ENCODE measurements at regions of chr4 and their contacts with region 1.

Region 1: DNA sequence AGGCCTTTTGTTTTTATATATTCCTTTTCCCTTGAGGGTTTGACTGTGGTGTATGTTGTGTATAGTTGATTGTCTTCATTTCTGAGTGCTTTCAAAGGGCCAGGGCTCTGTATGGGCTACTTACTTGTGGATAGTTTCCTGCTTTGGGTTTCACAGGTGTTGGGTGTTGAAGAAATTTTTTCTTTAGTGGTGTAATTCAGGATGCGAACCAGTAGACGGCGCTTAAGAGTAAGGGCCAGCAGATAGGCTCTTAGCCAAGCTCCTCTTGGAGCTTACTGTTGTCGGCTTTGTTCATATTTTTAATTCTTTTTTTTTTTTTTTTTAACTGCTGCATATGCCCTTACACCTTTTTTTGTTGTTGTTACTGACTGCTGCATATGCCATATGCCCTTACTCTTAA is 276.3 kb upstream of the GALNT7 start:
- DNase-seq: peak; percentile 52
- ATAC-seq: no peak
- H3K4me3 ChIP-seq: no peak overlapping the region
- H3K27ac ChIP-seq: no peak overlapping the region
- H3K4me1 ChIP-seq: no peaks in the 10 kb centered on the region
- H3K27me3 ChIP-seq: no peaks in the 10 kb centered on the region
- CTCF ChIP-seq: peak; percentile 70

Region 2: GRCh38 chr4:173111031-173111430 is 218.7 kb after region 1 on chr4:
- CTCF ChIA-PET with region 1: no interaction called
- POLR2A ChIA-PET with region 1: interaction called, 14 read pairs
- intact Hi-C with region 1: no loop called
- DNase-seq: no peak
- ATAC-seq: no peak
- H3K4me3 ChIP-seq: no peak overlapping the region
- H3K27ac ChIP-seq: no peak overlapping the region
- H3K4me1 ChIP-seq: no peaks in the 10 kb centered on the region
- H3K27me3 ChIP-seq: no peaks in the 10 kb centered on the region
- CTCF ChIP-seq: no peak